HEK293 (cell line): ENCODE measurements at regions of chr6 and their contacts with region 1.

Region 1: DNA sequence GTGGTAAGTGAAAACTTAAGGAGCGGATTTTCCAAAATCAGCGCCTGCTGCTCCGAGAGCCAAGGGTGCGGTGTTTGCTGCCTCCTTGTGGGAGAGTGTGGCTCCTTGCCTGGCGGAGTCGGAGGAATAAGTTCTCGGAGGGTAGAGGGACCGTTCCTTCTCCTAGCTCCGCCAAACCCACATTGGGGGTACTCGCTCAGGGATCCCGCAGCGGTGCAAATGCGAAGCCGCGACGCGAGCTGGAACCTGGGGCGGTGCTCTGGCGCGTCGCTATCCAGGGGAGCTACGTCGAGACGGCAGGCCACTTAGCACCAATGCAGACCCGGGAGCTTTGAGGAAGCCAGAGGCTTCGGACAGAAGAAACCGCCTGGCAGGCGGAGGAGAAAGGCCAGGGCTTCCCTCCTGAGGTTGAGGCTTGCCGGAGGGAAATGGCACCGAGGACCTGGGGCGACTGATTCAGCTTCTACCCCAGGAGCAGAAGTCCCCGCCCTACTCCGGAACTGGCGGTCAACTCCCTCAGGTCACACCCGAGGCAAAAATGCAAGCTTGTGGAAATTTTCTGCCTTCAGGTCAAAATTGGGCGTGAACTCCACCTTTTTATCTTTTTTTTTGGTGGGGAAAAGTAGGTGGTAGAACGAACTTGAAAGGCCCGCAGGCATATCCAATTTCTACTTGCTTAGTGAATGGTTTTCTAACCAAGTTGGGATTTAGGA is 5.7 kb upstream of the DDX43 start:
- H3K4me3 ChIP-seq: peak overlapping the region; percentile 50
- H3K27ac ChIP-seq: peak overlapping the region; percentile 40; the same call in 1 of the 2 replicates
- H3K4me1 ChIP-seq: peaks cover 3% of the 10 kb centered on the region; the same call in 1 of the 2 replicates
- CTCF ChIP-seq: peak; percentile 83

Region 2: GRCh38 chr6:73329201-73329600 is 59.8 kb before region 1 on chr6:
- CTCF ChIA-PET with region 1: interaction called, 39 read pairs
- POLR2A ChIA-PET with region 1: no interaction called
- H3K4me3 ChIP-seq: no peak overlapping the region
- H3K27ac ChIP-seq: no peak overlapping the region
- H3K4me1 ChIP-seq: no peaks in the 10 kb centered on the region
- CTCF ChIP-seq: no peak

Region 3: GRCh38 chr6:73375216-73375615 is 13.7 kb before region 1 on chr6:
- CTCF ChIA-PET with region 1: interaction called, 11 read pairs
- POLR2A ChIA-PET with region 1: no interaction called
- H3K4me3 ChIP-seq: no peak overlapping the region
- H3K27ac ChIP-seq: no peak overlapping the region
- H3K4me1 ChIP-seq: no peaks in the 10 kb centered on the region
- CTCF ChIP-seq: no peak